ENCODE measurements at regions of chr3 and their contacts with region 1.

Region 1: GRCh38 chr3:30408105-30408557 is 198.3 kb upstream of the TGFBR2 start:
- DNase-seq: peak; percentile 61
- ATAC-seq: no peak
- H3K4me3 ChIP-seq: no peak overlapping the region
- H3K27ac ChIP-seq: no peak overlapping the region
- H3K4me1 ChIP-seq: no peaks in the 10 kb centered on the region
- H3K27me3 ChIP-seq: no peaks in the 10 kb centered on the region
- CTCF ChIP-seq: no peak
- POLR2A ChIP-seq: no peak
- RAD21 ChIP-seq: no peak

Region 2: DNA sequence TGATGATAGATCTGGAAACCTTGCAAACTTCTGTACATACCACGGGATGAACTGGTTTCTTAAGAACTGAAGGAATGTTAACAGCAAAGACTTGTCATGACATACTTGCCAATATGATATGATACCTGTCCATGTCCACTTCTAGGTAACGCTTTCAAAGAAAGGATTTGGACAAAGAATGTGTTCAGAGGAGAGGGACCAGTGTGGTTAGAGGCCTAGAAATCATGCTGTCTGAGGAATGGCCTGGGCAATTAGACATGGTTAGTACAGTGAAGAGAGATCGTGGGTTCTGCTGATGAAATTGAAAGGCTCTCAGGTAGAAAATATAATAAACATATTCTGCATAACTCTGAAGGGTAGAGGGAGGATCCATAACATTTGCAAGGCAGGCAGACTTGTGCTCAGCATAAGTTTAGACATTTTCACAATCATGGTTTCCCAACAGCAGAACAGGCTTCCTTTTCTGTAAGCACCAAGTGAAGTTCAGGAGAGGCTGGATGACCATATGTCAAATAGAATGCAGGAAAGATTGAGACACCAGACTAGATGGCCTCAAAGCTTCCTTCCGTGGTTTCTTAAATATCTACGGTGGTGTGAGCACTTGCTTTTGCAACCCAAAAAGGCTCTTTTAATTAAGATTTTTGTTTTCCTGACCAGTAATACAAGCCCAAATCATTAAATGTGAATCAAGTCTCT is 238.2 kb after region 1 on chr3:
- CTCF ChIA-PET with region 1: no interaction called
- POLR2A ChIA-PET with region 1: no interaction called
- dilution Hi-C with region 1: no loop called
- in situ Hi-C with region 1: no loop called
- intact Hi-C with region 1: no loop called
- DNase-seq: no peak
- ATAC-seq: no peak
- H3K4me3 ChIP-seq: no peak overlapping the region
- H3K27ac ChIP-seq: peak overlapping the region; percentile 59; the same call in 1 of the 2 replicates
- H3K4me1 ChIP-seq: peaks cover 34% of the 10 kb centered on the region
- H3K27me3 ChIP-seq: no peaks in the 10 kb centered on the region
- CTCF ChIP-seq: no peak
- POLR2A ChIP-seq: no peak
- RAD21 ChIP-seq: no peak

Region 3: DNA sequence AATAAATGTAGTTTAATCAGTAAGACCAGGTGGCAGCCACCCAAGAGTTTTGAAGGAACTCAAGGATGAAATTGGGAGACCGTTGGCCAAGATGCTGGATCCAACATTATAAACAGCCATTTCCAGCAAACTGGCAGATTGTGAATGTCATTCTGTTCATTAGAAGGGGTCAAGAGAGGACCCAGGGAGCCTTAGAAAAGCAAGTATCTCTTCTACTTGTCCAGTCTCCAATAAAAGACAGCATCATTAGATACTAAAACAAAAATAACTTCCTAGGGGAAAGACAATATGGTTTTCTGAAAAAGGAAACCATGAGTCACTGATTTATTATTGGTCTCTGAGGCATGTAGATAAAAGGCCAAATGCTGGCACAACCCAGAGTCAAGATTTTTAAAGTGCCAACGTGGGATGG is 418.4 kb after region 1 on chr3:
- CTCF ChIA-PET with region 1: no interaction called
- POLR2A ChIA-PET with region 1: no interaction called
- dilution Hi-C with region 1: no loop called
- in situ Hi-C with region 1: no loop called
- intact Hi-C with region 1: loop called (anchors 5 kb)
- DNase-seq: no peak
- ATAC-seq: no peak
- H3K4me3 ChIP-seq: no peak overlapping the region
- H3K27ac ChIP-seq: no peak overlapping the region
- H3K4me1 ChIP-seq: no peaks in the 10 kb centered on the region
- H3K27me3 ChIP-seq: no peaks in the 10 kb centered on the region
- CTCF ChIP-seq: no peak
- POLR2A ChIP-seq: no peak
- RAD21 ChIP-seq: no peak

Measured in IMR-90 (cell line).